ENCODE measurements at regions of chr16 and their contacts with region 1.

Region 1: DNA sequence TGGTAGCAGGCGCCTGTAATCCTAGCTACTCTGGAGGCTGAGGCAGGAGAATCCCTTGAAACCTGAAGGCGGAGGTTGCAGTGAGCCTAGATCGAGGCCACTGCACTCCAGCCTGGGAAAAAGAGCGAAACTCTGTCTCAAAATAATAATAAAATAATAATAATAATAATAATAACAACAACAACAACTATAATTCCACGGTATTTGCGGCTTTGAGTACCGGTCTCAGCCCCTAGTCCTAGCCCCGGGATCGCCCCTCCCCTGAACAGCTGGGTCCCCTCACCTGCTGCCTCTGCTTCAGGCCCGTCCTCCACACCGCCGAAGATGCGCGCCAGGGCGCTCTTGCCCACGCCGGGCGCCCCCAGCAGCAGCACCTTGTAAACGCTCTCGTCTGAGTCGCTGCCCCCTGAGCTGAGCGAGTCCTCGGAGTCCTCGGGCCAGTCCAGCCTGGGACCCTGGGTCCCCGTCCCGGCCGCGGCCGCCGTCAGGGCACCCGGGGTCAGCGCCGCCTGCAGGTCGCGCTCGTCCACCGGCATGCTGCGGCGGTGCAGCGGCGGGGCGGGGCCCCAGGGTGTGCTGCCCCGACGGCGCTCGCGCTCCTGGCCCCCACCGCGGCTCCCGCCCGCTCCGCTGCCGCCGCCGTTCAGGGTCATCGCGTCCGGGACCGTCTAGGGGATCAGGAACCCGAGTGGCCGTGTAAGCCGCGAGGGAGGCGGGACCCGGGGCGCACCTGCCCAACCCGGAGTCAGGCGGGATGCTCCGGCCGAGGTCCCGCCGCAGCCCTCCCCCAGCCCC is 611 bp downstream of the RRAD start:
- DNase-seq: no peak
- H3K4me3 ChIP-seq: peak overlapping the region; percentile 31 to 36
- H3K27ac ChIP-seq: peak overlapping the region; percentile 56 to 68
- H3K4me1 ChIP-seq: peaks cover 5% of the 10 kb centered on the region
- H3K27me3 ChIP-seq: no peaks in the 10 kb centered on the region
- CTCF ChIP-seq: peak in 3 of 4 experiments; percentile 12 to 51 (median 36)
- POLR2A ChIP-seq: no peak

Region 2: DNA sequence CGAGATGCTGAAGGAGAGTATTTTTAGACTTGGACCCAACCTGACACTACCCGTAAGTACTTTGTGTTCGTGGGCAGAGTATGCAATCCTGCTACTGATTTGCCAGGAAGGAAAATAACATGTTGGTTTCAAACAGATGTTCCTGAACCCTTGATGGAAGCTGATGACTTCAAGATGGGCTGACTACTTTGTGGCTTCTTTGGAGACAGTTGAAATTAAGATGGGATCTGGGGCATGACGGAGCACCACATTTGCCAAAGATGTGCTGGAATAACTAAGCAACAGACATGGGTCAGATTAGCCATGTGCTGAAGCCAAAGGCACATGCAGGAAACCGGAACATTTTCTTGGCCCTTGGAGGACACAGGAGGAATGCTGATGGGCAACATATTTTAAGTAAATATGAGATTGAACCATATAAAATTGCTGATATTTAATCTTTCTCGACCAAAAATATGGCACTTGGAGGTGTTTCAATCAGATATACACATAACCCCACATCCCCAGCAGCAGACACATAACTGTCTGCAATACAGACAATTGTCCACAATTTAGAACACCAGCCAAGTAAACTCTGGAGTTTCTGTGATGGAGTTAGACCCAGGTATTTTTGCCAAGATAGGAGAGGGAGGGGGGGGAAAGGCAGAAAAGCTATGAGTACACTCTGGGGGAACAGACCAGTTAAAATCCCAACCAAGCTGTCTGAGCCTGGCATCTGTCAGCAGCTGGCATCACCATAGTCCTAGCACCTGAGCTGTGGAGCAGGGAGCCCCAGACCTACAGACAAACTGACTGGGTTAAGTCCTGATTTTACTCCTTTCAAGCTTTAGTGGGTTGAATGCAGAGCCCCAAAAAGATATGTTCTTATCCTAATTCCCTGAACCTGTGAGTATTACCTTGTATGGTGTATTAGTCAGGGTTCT is 887.7 kb before region 1 on chr16:
- intact Hi-C with region 1: no loop called
- DNase-seq: peak; percentile 51
- H3K4me3 ChIP-seq: no peak overlapping the region
- H3K27ac ChIP-seq: no peak overlapping the region
- H3K4me1 ChIP-seq: no peaks in the 10 kb centered on the region
- H3K27me3 ChIP-seq: no peaks in the 10 kb centered on the region
- CTCF ChIP-seq: no peak
- POLR2A ChIP-seq: no peak

Region 3: GRCh38 chr16:66894948-66895688 is 29.6 kb before region 1 on chr16:
- intact Hi-C with region 1: loop called (anchors 1 kb)
- DNase-seq: peak; percentile 34
- H3K4me3 ChIP-seq: no peak overlapping the region
- H3K27ac ChIP-seq: no peak overlapping the region
- H3K4me1 ChIP-seq: no peaks in the 10 kb centered on the region
- H3K27me3 ChIP-seq: no peaks in the 10 kb centered on the region
- CTCF ChIP-seq: peak; percentile 39 to 74 (median 63)
- POLR2A ChIP-seq: no peak

Region 4: GRCh38 chr16:66905633-66906539 is 18.8 kb before region 1 on chr16:
- intact Hi-C with region 1: loop called (anchors 2 kb)
- DNase-seq: no peak
- H3K4me3 ChIP-seq: no peak overlapping the region
- H3K27ac ChIP-seq: no peak overlapping the region
- H3K4me1 ChIP-seq: no peaks in the 10 kb centered on the region
- H3K27me3 ChIP-seq: no peaks in the 10 kb centered on the region
- CTCF ChIP-seq: no peak
- POLR2A ChIP-seq: no peak

Region 5: GRCh38 chr16:66961065-66961744 is 36.5 kb after region 1 on chr16 and contains the start of gene CES3:
- intact Hi-C with region 1: no loop called
- DNase-seq: no peak
- H3K4me3 ChIP-seq: no peak within 1 kb of the TSS
- H3K27ac ChIP-seq: no peak within 1 kb of the TSS
- H3K4me1 ChIP-seq: no peaks in the 10 kb centered on the region
- H3K27me3 ChIP-seq: no peaks in the 10 kb centered on the region
- CTCF ChIP-seq: peak in 2 of 4 experiments; percentile 15 to 47
- POLR2A ChIP-seq: no peak
- total RNA-seq, gene CES3: 0.36 to 0.80 TPM

Measured in prostate gland (tissue), 2 donors.